HCT116 (cell line): ENCODE measurements at regions of chr5 and their contacts with region 1.

Region 1: GRCh38 chr5:158064334-158065123 is 205.6 kb upstream of the CLINT1 start:
- DNase-seq: no peak
- ATAC-seq: no peak
- H3K4me3 ChIP-seq: no peak overlapping the region
- H3K27ac ChIP-seq: no peak overlapping the region
- H3K4me1 ChIP-seq: no peaks in the 10 kb centered on the region
- H3K27me3 ChIP-seq: peaks cover 43% of the 10 kb centered on the region
- CTCF ChIP-seq: no peak
- POLR2A ChIP-seq: no peak
- RAD21 ChIP-seq: no peak

Region 2: GRCh38 chr5:157624144-157624543 is 440.4 kb before region 1 on chr5:
- CTCF ChIA-PET with region 1: no interaction called
- POLR2A ChIA-PET with region 1: no interaction called
- RAD21 ChIA-PET with region 1: no interaction called
- intact Hi-C with region 1: no loop called
- DNase-seq: no peak
- ATAC-seq: no peak
- H3K4me3 ChIP-seq: no peak overlapping the region
- H3K27ac ChIP-seq: no peak overlapping the region
- H3K4me1 ChIP-seq: no peaks in the 10 kb centered on the region
- H3K27me3 ChIP-seq: no peaks in the 10 kb centered on the region
- CTCF ChIP-seq: no peak
- POLR2A ChIP-seq: no peak
- RAD21 ChIP-seq: no peak

Region 3: DNA sequence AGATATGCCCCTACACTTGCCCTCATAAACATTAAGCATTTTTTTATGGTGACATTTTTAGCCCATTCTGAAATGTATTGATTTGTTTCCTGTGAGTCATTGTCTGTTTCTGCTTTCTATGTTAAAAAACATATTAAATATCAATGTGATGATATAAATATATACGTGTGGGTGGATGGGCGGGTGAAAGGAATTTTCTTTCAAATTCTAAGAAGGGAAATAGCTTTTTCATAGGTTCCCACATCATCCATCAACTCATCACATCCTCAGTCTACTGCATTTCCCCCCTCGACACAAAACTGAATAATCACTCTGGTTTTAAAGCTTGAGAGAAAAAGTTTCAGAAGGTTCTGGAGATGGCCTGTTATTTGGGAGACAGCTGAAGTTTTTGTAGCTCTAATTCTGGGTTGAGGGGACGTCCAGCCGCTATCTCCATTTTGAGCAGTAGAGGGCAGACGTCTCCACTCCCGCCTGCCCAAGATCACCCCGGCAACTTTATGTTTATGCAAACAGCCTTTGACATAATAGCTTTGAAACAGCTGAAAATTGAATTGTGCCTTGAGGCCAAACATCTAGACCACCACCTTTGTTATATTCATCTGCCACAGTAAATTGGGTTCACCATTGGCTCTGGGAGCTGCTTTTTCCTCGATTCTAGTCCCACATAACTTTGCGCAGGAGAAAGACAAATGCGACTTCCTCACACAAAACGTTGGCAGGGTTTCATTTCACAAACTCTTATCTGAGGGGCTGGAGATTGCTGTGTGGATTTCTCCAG is 10.7 kb after region 1 on chr5:
- CTCF ChIA-PET with region 1: interaction called, 40 read pairs
- POLR2A ChIA-PET with region 1: no interaction called
- RAD21 ChIA-PET with region 1: no interaction called
- intact Hi-C with region 1: no loop called
- DNase-seq: peak; percentile 42
- ATAC-seq: peak; percentile 93
- H3K4me3 ChIP-seq: no peak overlapping the region
- H3K27ac ChIP-seq: no peak overlapping the region
- H3K4me1 ChIP-seq: no peaks in the 10 kb centered on the region
- H3K27me3 ChIP-seq: peaks cover 15% of the 10 kb centered on the region
- CTCF ChIP-seq: peak; percentile 37 to 80 (median 78); a peak in 5 of 6 replicates
- POLR2A ChIP-seq: no peak
- RAD21 ChIP-seq: peak; percentile 65